CD4-positive, alpha-beta T cell (primary cell): ENCODE measurements at regions of chrX and their contacts with region 1.

Region 1: GRCh38 chrX:70096052-70096451 is 33.8 kb downstream of the OTUD6A start:
- DNase-seq: no peak
- ATAC-seq: no peak
- H3K4me3 ChIP-seq: no peak overlapping the region
- H3K4me3 Mint-ChIP-seq: no peak overlapping the region
- H3K27ac ChIP-seq: no peak overlapping the region
- H3K27ac Mint-ChIP-seq: no peak overlapping the region
- H3K4me1 ChIP-seq: no peaks in the 10 kb centered on the region
- H3K4me1 Mint-ChIP-seq: no peaks in the 10 kb centered on the region
- H3K27me3 ChIP-seq: no peaks in the 10 kb centered on the region
- H3K27me3 Mint-ChIP-seq: peaks cover 7% of the 10 kb centered on the region
- CTCF ChIP-seq: no peak

Region 2: DNA sequence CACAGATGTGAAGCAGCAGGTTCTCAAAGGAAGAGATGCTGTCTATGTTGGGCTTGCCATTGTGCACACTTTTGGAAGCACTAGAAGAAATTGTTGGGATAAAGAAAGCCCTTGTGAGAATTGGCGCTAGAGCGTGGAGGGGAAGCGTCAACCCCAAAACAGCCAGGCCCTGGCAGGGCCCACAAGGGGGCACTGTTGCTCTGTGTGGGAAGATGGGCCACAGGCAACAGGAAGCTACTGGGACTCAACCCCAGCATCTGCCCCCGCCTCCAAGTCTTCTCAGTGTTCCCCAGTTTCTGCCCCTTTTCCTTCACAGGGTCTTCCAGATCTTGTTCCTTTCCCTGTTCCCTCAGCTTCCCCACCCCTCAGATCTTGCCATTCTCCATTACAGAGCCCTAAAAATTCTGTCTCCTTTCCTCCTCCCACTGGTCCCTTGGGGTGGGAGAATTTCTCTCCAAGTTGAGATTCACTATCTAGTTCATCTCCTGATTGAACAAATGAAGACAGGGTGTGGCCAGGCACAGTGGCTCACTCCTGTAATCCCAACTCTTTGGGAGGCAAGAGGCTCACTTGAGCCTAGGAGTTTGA is 1363.1 kb before region 1 on chrX:
- CTCF ChIA-PET with region 1: no interaction called
- POLR2A ChIA-PET with region 1: no interaction called
- intact Hi-C with region 1: loop called in 1 of 2 experiments (anchors 10 kb)
- DNase-seq: peak; percentile 24 to 70 (median 52)
- ATAC-seq: peak; percentile 37
- H3K4me3 ChIP-seq: no peak overlapping the region
- H3K4me3 Mint-ChIP-seq: no peak overlapping the region
- H3K27ac ChIP-seq: no peak overlapping the region
- H3K27ac Mint-ChIP-seq: no peak overlapping the region
- H3K4me1 ChIP-seq: no peaks in the 10 kb centered on the region
- H3K4me1 Mint-ChIP-seq: no peaks in the 10 kb centered on the region
- H3K27me3 ChIP-seq: peaks cover 0 to 6% of the 10 kb centered on the region in 2 experiments
- H3K27me3 Mint-ChIP-seq: peaks cover 22% of the 10 kb centered on the region
- CTCF ChIP-seq: peak; percentile 41

Region 3: DNA sequence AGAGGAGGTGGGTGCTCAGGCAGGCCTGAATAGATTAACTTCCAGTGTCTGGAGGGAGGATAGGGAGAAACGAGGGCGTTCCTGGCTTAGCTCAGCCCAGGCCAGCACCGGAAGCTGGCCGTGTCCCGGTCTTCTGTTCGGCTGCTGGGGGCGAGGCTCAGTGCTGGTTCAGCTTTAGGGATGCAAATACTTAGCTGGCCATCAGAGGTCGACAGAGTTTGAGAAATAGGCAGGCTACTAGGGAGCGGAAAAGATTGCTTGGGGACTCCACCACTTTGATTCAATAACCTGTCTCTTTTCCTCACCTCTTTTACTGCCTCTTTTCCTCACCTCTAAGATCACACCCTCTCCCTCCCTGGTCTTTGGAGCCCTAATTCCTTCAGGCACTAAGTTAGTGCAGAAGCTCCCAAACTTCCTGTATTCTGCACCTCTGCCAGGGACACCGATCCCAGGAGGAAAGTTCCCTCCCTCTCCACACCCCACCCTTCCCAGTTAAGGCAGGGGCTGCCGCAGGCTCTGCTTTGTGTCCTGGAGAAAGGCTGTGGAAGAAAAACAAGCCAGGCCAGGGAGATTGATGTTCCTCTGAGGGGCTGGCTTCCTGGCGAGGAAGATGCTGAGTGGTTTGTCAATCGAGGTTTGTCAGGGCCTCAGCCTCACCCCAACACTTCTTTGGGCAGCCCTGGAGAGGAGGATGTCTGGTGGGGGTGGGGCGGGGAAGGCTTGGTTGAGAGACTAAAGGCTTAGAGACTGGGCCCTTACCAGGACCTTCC is 1273.2 kb before region 1 on chrX:
- CTCF ChIA-PET with region 1: no interaction called
- POLR2A ChIA-PET with region 1: no interaction called
- intact Hi-C with region 1: loop called (anchors 5 kb)
- DNase-seq: peak in 3 of 14 experiments; percentile 24 to 45 (median 40)
- ATAC-seq: peak; percentile 58
- H3K4me3 ChIP-seq: no peak overlapping the region
- H3K4me3 Mint-ChIP-seq: no peak overlapping the region
- H3K27ac ChIP-seq: no peak overlapping the region
- H3K27ac Mint-ChIP-seq: no peak overlapping the region
- H3K4me1 ChIP-seq: peaks cover under 1% of the 10 kb centered on the region
- H3K4me1 Mint-ChIP-seq: peaks cover 2% of the 10 kb centered on the region
- H3K27me3 ChIP-seq: no peaks in the 10 kb centered on the region
- H3K27me3 Mint-ChIP-seq: no peaks in the 10 kb centered on the region
- CTCF ChIP-seq: no peak

Region 4: GRCh38 chrX:69493193-69493592 is 602.9 kb before region 1 on chrX:
- CTCF ChIA-PET with region 1: no interaction called
- POLR2A ChIA-PET with region 1: no interaction called
- intact Hi-C with region 1: loop called in 1 of 2 experiments (anchors 5 kb)
- DNase-seq: peak in 10 of 14 experiments; percentile 3 to 42 (median 18)
- ATAC-seq: no peak
- H3K4me3 ChIP-seq: no peak overlapping the region
- H3K4me3 Mint-ChIP-seq: no peak overlapping the region
- H3K27ac ChIP-seq: no peak overlapping the region
- H3K27ac Mint-ChIP-seq: no peak overlapping the region
- H3K4me1 ChIP-seq: no peaks in the 10 kb centered on the region
- H3K4me1 Mint-ChIP-seq: no peaks in the 10 kb centered on the region
- H3K27me3 ChIP-seq: peaks cover 0 to 9% of the 10 kb centered on the region in 2 experiments
- H3K27me3 Mint-ChIP-seq: peaks cover 23% of the 10 kb centered on the region
- CTCF ChIP-seq: no peak

Region 5: GRCh38 chrX:69538321-69538876 is 557.7 kb before region 1 on chrX:
- CTCF ChIA-PET with region 1: no interaction called
- POLR2A ChIA-PET with region 1: no interaction called
- intact Hi-C with region 1: loop called (anchors 5 kb)
- DNase-seq: peak; percentile 29 to 79 (median 70)
- ATAC-seq: peak; percentile 71
- H3K4me3 ChIP-seq: peak overlapping the region; percentile 46
- H3K4me3 Mint-ChIP-seq: no peak overlapping the region
- H3K27ac ChIP-seq: no peak overlapping the region
- H3K27ac Mint-ChIP-seq: no peak overlapping the region
- H3K4me1 ChIP-seq: peaks cover 15% of the 10 kb centered on the region
- H3K4me1 Mint-ChIP-seq: peaks cover 7% of the 10 kb centered on the region
- H3K27me3 ChIP-seq: no peaks in the 10 kb centered on the region
- H3K27me3 Mint-ChIP-seq: peaks cover 12% of the 10 kb centered on the region
- CTCF ChIP-seq: peak; percentile 45

Region 6: GRCh38 chrX:69932323-69932722 is 163.7 kb before region 1 on chrX:
- CTCF ChIA-PET with region 1: no interaction called
- POLR2A ChIA-PET with region 1: no interaction called
- intact Hi-C with region 1: no loop called
- DNase-seq: no peak
- ATAC-seq: no peak
- H3K4me3 ChIP-seq: no peak overlapping the region
- H3K4me3 Mint-ChIP-seq: no peak overlapping the region
- H3K27ac ChIP-seq: no peak overlapping the region
- H3K27ac Mint-ChIP-seq: no peak overlapping the region
- H3K4me1 ChIP-seq: no peaks in the 10 kb centered on the region
- H3K4me1 Mint-ChIP-seq: no peaks in the 10 kb centered on the region
- H3K27me3 ChIP-seq: no peaks in the 10 kb centered on the region
- H3K27me3 Mint-ChIP-seq: no peaks in the 10 kb centered on the region
- CTCF ChIP-seq: no peak

Region 7: DNA sequence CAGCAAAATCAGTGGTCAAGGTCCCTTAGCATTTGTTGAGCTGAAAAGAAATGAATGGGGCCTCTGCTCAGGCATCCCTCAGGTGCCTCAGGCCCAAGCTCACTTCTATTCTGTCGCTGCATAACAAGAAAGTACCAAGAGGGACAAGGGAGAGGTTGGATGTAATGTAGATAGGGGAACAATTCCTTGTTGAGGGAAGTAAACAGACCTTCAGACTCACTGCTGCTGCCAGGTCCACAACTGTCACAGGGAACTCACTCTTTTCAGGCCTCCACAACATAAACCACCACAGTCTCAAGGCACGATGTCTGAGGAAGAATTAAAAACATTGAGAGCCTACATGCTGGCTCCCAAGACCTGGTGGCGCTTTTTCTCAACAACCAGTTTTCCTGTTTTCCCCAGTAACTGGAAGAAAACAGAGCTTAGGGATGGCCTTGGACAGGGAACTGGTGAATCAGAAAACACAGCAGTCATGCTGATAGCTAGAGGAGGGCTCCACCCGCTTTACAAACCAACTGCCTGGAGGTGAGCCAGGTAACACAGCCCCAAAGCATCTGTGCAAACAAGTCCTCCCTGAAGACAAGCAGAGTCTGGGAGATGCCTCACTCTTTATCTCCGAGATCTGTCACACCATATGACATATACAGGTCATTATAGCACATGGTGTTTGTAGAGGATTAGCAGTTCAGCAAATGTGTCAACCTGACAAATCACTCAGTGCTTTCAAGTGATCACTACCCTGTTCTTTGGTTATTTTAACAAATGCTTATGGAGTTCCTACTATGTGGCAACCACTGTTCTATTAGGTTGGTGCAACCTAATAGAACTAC is 124.1 kb after region 1 on chrX:
- CTCF ChIA-PET with region 1: no interaction called
- POLR2A ChIA-PET with region 1: no interaction called
- intact Hi-C with region 1: no loop called
- DNase-seq: no peak
- ATAC-seq: no peak
- H3K4me3 ChIP-seq: no peak overlapping the region
- H3K4me3 Mint-ChIP-seq: no peak overlapping the region
- H3K27ac ChIP-seq: no peak overlapping the region
- H3K27ac Mint-ChIP-seq: no peak overlapping the region
- H3K4me1 ChIP-seq: no peaks in the 10 kb centered on the region
- H3K4me1 Mint-ChIP-seq: no peaks in the 10 kb centered on the region
- H3K27me3 ChIP-seq: no peaks in the 10 kb centered on the region
- H3K27me3 Mint-ChIP-seq: no peaks in the 10 kb centered on the region
- CTCF ChIP-seq: no peak